CD14-positive monocyte (primary cell): ENCODE measurements at regions of chr17 and their contacts with region 1.

Region 1: DNA sequence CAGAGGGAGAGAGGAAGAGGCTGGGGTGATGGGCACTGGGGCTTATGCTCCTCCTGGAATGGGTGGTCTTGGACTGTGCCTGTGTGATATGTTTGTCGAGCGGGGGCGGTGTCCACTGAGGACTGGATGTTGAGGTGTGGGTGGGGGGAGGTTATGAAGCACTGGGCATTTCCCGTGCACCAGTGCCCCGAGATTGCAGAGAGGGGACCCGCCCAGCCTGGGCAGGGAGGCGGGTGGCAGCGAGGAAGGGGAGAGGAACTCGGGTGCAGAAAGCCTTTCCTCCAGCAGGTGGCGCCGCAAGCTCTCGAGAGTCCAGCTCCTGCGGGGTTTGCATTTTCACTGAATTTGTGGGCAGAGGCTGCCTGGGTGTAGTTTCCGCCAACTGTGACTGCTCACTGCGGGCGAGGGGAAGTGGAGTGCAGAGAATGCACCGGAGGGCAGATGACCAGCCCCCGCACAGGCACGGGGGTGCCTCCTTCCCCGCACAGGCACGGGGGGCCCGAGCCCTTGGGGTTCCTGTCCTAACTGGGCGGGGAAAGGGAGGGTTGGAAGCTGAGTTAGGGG is 190.6 kb downstream of the SEC14L1 start:
- DNase-seq: peak; percentile 90 to 93 (median 93)
- H3K4me3 ChIP-seq: peak overlapping the region; percentile 7 to 70 (median 20)
- H3K4me3 Mint-ChIP-seq: peak overlapping the region; percentile 63 to 85
- H3K27ac ChIP-seq: peak overlapping the region; percentile 36 to 83
- H3K27ac Mint-ChIP-seq: peak overlapping the region; percentile 76 to 89 (median 85)
- H3K4me1 ChIP-seq: peaks cover 20 to 37% of the 10 kb centered on the region in 2 donors
- H3K4me1 Mint-ChIP-seq: peaks cover 39% of the 10 kb centered on the region
- H3K27me3 ChIP-seq: no peaks in the 10 kb centered on the region
- H3K27me3 Mint-ChIP-seq: peaks cover 0 to 2% (median 0%) of the 10 kb centered on the region in 3 donors
- CTCF ChIP-seq: peak; percentile 88

Region 2: DNA sequence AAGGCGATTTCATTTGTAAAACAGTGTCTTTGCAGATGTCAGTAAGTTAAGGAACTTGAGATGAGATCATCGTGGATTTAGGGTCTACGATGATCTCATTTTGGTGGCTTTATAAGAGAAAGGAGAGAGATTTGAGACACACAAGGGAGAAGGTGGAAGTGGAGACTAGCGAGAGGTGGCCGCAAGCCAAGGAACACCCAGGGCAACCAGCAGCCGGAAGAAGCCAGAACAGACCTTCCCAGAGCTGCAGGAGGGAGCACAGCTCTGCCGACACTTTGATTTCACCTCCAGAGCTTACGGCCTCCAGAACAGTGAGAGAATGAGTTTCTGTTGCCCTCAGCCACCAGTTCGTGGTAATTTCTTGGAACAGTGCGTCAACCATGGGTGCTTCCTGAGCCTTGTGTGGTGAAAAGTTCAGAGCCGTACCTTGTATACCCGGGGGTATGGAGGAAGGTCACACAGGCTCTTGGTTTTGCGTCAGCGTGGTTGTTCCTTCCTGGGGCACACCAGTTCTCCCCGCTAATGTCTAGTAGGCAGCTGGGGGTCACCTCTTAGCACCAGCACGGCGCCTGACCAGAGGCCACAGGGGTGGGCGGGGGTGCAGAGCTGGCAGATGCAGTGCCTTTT is 203.5 kb before region 1 on chr17:
- intact Hi-C with region 1: no loop called
- DNase-seq: peak; percentile 57 to 67 (median 62)
- H3K4me3 ChIP-seq: peak overlapping the region; percentile 31 to 74 (median 44)
- H3K4me3 Mint-ChIP-seq: peak overlapping the region; percentile 85 to 95
- H3K27ac ChIP-seq: peak overlapping the region; percentile 89 to 90
- H3K27ac Mint-ChIP-seq: peak overlapping the region; percentile 94 to 97 (median 96)
- H3K4me1 ChIP-seq: peaks cover 32 to 38% of the 10 kb centered on the region in 2 donors
- H3K4me1 Mint-ChIP-seq: peaks cover 46% of the 10 kb centered on the region
- H3K27me3 ChIP-seq: no peaks in the 10 kb centered on the region
- H3K27me3 Mint-ChIP-seq: peaks cover 0 to 2% (median 1%) of the 10 kb centered on the region in 3 donors
- CTCF ChIP-seq: no peak

Region 3: GRCh38 chr17:77287432-77288071 is 43.8 kb before region 1 on chr17:
- intact Hi-C with region 1: no loop called
- DNase-seq: no peak
- H3K4me3 ChIP-seq: no peak overlapping the region
- H3K4me3 Mint-ChIP-seq: no peak overlapping the region
- H3K27ac ChIP-seq: no peak overlapping the region
- H3K27ac Mint-ChIP-seq: peak overlapping the region in 1 of 7 donors; percentile 55
- H3K4me1 ChIP-seq: peaks cover 18 to 33% of the 10 kb centered on the region in 2 donors
- H3K4me1 Mint-ChIP-seq: peaks cover 27% of the 10 kb centered on the region
- H3K27me3 ChIP-seq: peaks cover 0 to 10% of the 10 kb centered on the region in 2 donors
- H3K27me3 Mint-ChIP-seq: peaks cover 13 to 17% (median 16%) of the 10 kb centered on the region in 3 donors
- CTCF ChIP-seq: no peak

Region 4: DNA sequence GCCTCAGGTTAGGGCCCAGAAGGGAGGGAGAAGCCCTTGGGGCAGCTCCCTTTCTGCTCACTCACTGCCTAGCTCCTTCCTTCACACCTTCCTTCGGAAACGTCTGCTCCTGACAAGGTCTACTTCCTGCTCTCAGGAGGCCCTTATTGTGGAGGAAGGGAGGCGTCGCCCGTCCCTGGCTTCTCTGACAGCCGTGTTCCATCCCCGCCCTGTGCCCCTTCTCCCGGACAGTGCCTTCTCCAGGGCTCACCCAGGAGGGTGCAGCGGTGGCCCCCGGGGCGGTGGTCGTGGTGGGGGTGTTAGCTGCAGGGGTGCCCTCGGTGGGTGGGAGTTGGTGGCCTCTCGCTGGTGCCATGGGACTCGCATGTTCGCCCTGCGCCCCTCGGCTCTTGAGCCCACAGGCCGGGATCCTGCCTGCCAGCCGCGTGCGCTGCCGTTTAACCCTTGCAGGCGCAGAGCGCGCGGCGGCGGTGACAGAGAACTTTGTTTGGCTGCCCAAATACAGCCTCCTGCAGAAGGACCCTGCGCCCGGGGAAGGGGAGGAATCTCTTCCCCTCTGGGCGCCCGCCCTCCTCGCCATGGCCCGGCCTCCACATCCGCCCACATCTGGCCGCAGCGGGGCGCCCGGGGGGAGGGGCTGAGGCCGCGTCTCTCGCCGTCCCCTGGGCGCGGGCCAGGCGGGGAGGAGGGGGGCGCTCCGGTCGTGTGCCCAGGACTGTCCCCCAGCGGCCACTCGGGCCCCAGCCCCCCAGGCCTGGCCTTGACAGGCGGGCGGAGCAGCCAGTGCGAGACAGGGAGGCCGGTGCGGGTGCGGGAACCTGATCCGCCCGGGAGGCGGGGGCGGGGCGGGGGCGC is 41.3 kb after region 1 on chr17:
- intact Hi-C with region 1: loop called (anchors 5 kb)
- DNase-seq: peak; percentile 48 to 56 (median 52)
- H3K4me3 ChIP-seq: peak overlapping the region; percentile 73 to 100 (median 74)
- H3K4me3 Mint-ChIP-seq: peak overlapping the region; percentile 71 to 84
- H3K27ac ChIP-seq: peak overlapping the region in 1 of 2 donors; percentile 89
- H3K27ac Mint-ChIP-seq: peak overlapping the region in 2 of 7 donors; percentile 43 to 68
- H3K4me1 ChIP-seq: peaks cover 41 to 58% of the 10 kb centered on the region in 2 donors
- H3K4me1 Mint-ChIP-seq: peaks cover 50% of the 10 kb centered on the region
- H3K27me3 ChIP-seq: no peaks in the 10 kb centered on the region
- H3K27me3 Mint-ChIP-seq: peaks cover 4 to 9% (median 8%) of the 10 kb centered on the region in 3 donors
- CTCF ChIP-seq: no peak

Region 5: DNA sequence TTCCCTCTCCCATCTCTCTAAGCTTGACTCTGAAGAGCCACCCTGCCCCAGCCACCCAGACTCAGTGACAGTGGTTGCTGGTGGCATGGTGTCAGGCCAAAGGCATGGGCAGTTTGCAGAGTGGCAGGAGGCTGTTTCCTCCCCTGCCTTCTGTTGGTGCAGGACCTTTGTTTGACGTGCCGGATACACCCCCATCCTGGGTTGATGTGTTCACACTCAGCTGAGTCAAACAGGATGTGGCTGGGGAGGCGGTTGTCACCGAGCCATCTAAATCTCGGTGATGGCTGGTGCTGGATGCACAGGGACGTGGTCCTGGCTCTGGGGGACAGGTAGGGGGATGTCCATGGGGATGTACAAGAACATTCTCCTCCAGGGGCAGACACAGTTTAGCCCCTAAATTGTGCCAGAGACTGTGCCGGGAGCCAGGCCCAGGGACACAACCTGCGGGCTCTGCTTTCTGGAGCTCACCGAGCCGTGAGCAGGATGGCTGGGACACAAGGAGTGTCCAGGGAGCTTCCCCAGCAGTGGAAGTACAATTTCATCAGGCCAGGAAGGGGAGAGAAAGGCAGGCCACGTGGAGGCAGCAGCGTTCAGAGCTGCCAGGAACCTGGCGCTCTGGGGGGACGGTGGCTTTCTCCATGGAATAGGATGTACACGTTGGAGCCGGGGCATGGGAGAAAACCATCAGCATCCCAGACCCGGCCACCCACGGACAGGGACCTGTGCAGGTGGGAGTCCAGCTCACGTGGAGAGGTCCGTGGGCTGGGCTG is 73.6 kb after region 1 on chr17:
- intact Hi-C with region 1: loop called in 1 of 2 experiments (anchors 5 kb)
- DNase-seq: peak; percentile 83 to 87 (median 87)
- H3K4me3 ChIP-seq: peak overlapping the region; percentile 13 to 79 (median 42)
- H3K4me3 Mint-ChIP-seq: peak overlapping the region; percentile 82 to 97
- H3K27ac ChIP-seq: peak overlapping the region; percentile 69 to 96
- H3K27ac Mint-ChIP-seq: peak overlapping the region; percentile 95 to 98 (median 97)
- H3K4me1 ChIP-seq: peaks cover 75 to 91% of the 10 kb centered on the region in 2 donors
- H3K4me1 Mint-ChIP-seq: peaks cover 86% of the 10 kb centered on the region
- H3K27me3 ChIP-seq: no peaks in the 10 kb centered on the region
- H3K27me3 Mint-ChIP-seq: peaks cover 3 to 8% (median 4%) of the 10 kb centered on the region in 3 donors
- CTCF ChIP-seq: no peak

Region 6: GRCh38 chr17:77429919-77430752 is 98.8 kb after region 1 on chr17:
- intact Hi-C with region 1: loop called (anchors 1 to 5 kb)
- DNase-seq: peak; percentile 65 to 73 (median 65)
- H3K4me3 ChIP-seq: peak overlapping the region in 1 of 3 experiments; percentile 55
- H3K4me3 Mint-ChIP-seq: peak overlapping the region; percentile 56 to 84
- H3K27ac ChIP-seq: peak overlapping the region; percentile 53 to 67
- H3K27ac Mint-ChIP-seq: peak overlapping the region; percentile 75 to 95 (median 89)
- H3K4me1 ChIP-seq: peaks cover 83 to 88% of the 10 kb centered on the region in 2 donors
- H3K4me1 Mint-ChIP-seq: peaks cover 84% of the 10 kb centered on the region
- H3K27me3 ChIP-seq: no peaks in the 10 kb centered on the region
- H3K27me3 Mint-ChIP-seq: peaks cover 0 to 3% (median 0%) of the 10 kb centered on the region in 3 donors
- CTCF ChIP-seq: peak; percentile 96

Region 7: DNA sequence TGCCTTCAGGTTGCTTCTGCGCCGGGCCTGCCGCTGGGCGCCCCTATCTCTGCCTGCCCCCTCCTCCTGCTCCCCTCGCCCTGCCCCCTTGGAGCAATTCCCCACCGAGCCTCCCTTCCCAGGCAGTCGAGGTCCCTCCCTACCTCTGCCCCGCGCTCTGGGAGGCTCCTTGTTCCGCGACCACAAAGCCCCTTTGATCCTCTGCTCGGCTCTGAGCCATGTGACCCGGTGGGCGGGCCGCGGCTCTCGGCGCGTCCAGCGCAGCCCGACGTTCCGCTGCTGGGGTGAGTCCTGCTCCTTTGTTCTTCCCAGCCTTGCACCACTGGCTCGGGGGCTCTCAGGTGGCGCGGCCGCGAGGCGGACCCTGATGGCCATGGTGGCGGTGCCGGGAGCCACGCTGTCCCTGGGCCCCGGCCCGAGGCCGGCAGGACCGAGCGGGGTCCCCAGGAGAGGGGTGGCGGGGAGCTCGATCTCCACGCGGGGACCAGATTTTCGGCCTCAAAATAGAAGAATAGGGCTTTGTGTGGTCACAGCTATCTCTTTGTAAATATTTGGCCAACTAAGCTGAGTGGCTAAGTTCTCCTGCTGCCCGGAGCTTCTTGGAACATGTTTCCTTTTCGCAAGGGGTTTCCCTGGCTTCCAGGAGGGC is 120.0 kb after region 1 on chr17:
- intact Hi-C with region 1: loop called in 1 of 2 experiments (anchors 5 kb)
- DNase-seq: peak in 2 of 3 donors; percentile 49
- H3K4me3 ChIP-seq: peak overlapping the region; percentile 68 to 89 (median 68)
- H3K4me3 Mint-ChIP-seq: peak overlapping the region; percentile 97 to 98
- H3K27ac ChIP-seq: peak overlapping the region; percentile 57 to 85
- H3K27ac Mint-ChIP-seq: peak overlapping the region; percentile 85 to 95 (median 92)
- H3K4me1 ChIP-seq: peaks cover 71 to 81% of the 10 kb centered on the region in 2 donors
- H3K4me1 Mint-ChIP-seq: peaks cover 84% of the 10 kb centered on the region
- H3K27me3 ChIP-seq: no peaks in the 10 kb centered on the region
- H3K27me3 Mint-ChIP-seq: peaks cover 0 to 3% (median 0%) of the 10 kb centered on the region in 3 donors
- CTCF ChIP-seq: no peak

Region 8: DNA sequence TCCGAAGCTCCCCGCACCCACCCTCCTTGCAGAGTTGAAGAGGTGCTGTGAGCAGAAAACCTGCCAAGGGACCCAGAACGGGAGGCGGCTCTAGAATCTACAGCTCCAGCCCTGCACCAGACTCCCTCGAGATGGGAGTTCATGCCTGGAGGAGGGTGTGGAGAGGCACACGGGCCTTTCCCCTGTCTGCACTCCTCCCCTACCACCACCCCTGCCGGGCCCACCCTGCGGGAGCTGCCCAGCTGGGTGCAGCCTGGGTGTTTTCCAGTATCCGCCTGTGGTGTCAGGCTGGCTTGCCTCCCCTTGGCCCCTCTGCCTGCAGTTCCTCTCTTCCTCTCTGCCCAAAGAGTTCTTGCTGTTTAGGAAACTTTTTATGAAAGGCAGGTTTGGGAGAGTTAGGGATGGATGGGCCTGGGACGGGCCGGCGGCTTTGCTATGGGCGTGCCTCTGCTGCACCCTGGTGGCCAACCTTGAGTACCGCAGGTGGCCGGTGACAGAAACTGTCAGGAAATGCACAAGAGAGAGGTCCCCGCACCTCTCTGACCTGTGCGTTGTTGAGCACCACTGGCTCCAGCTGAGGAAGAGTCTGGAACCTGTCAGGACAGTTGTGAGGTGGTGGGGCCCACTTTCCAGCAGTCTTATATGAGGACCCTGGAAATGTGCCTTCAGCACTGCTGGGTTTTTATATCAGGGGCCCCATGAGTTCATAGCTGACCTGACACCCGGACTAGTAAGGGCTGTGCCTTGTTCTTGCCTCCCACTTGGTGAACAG is 163.5 kb after region 1 on chr17:
- intact Hi-C with region 1: loop called (anchors 1 to 2 kb)
- DNase-seq: peak; percentile 62 to 75 (median 69)
- H3K4me3 ChIP-seq: no peak overlapping the region
- H3K4me3 Mint-ChIP-seq: no peak overlapping the region
- H3K27ac ChIP-seq: peak overlapping the region in 1 of 2 donors; percentile 70
- H3K27ac Mint-ChIP-seq: peak overlapping the region in 4 of 7 donors; percentile 46 to 80 (median 63)
- H3K4me1 ChIP-seq: peaks cover 29 to 35% of the 10 kb centered on the region in 2 donors
- H3K4me1 Mint-ChIP-seq: peaks cover 33% of the 10 kb centered on the region
- H3K27me3 ChIP-seq: no peaks in the 10 kb centered on the region
- H3K27me3 Mint-ChIP-seq: no peaks in the 10 kb centered on the region
- CTCF ChIP-seq: peak; percentile 96